ENCODE measurements at regions of chr22 and their contacts with region 1.

Region 1: DNA sequence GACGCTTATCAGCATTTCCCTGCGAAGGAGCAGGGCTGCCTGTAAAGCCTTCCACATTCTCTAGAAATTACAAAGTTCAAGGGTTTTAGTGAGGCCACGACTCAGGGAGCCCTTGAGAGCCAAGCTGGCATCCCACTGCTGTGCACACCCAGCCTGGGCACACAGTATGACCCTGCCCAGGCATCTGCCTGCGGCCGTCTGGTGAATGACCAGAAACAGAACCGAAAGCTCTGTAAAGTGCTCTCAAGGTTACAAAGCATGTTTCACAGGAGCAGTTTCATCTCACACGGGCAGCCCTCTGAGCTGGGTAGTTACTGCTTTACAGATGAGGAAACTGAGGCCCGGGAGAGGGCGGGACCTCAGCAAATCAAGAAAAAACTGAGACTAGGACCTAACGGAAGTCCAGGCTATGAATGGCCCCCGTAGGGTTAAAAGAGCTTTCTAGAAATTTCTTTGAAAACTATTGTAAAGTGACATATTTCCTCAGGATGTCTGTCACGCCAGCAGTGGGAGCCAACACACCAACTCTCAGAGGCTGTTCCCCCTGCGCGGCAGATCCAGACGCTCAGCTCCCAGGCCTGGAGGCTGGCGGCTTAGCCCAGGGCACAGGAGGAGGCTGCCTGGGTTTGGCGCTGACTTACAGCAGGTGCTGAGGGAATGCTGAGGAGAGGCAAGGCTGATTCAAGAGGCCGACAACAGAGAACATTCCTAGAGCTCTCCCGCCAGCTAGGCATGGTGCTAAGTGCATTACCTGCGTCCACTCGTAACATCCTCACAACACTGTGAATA is 7.7 kb upstream of the TCF20 start:
- DNase-seq: peak; percentile 89

Region 2: DNA sequence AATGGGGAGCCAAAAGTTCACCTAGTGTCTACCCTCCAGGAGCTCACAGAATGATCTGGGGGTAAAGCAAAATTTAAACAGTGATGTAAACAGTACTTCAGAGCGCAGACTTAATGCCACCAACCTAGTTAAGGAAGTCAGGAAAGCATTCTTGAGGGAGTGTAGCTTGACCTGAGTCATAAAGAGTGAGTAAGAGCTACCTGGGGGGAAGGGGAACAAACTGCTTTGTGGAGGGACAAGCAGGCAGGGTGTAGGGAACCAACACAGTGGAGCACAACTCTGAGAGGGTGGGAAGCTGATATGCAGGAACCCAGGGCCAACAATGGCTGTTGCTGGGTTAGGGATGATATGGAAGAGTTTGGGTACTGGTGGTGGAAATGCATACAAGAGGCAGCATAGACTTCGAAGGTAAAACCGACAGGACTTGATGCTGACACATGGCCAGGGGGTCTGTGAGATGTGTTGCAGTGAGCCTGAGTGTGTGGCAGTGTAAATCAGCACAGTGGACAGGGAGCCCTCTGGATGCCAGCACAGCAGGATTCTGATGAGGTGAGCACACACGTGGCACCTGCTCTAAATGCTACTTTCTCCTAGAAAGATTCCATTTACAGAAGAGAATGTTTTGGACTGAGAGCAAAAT is 89.3 kb before region 1 on chr22:
- in situ Hi-C with region 1: no loop called
- DNase-seq: peak; percentile 23

Region 3: DNA sequence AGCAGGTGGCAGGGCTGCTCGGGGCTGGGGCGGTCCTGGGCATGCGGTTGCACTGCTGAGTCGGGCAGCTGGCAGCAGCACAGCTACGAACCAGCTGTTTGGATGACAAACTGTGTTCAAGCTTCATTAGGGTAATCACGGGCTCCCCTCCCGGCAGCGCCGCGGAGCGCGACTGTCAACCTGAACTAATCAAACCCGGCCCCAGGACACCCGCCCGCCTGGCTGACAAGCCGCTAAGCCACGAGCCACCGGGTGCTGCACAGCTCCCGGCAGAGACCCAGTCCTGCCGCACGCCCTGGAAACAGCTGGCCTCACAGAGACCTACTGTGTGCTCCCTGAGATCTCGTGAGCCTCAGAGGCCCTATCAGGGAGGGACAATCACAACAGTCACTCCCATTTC is 52.8 kb after region 1 on chr22:
- in situ Hi-C with region 1: loop called (anchors 5 kb)
- DNase-seq: no peak

Region 4: DNA sequence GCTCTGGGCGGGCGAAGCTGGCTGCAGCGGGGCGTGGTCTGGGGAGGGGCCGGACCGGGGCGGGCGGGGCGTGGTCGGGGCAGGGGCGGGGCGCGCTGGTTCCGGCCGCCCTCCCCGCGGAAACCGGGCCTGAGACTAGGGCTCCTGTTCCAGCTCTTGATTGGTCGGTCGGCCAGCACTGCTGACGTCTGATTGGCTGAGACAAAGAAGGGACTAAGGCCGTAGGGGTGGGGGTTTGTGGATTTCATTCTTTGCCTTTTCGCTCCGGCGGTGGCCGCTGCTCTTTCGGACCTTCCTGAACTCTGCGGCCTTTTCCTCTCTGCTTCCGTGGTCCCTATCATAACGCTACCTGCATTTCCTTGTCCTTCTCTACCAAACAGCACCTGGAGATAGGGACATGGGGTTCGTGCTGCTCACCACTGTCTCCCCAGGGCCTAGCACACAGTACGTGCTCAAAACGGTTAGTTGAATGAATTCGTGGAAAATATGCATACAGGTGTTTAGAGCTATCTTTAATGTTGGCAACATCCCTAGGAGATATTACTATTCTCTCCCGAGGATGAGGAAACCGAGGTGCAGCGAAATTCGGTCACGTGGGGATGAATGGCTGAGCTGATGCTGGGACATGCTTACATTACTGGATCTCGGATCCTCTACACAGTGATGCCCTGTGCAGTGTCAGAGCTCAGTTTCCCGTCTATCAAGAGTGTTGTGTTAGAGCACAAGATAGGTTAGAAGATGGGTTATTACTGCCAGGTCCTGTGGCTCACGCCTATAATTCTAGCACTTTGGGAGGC is 91.3 kb after region 1 on chr22:
- in situ Hi-C with region 1: loop called (anchors 5 kb)
- DNase-seq: peak; percentile 99

Measured in G401 (cell line).